Posterior cingulate gyrus (tissue), 11 donors: ENCODE measurements at regions of chr6 and their contacts with region 1.

Region 1: GRCh38 chr6:138115877-138116660 is 8.8 kb upstream of the PERP start:
- DNase-seq: peak in 8 of 10 donors; percentile 29 to 92 (median 51)

Region 2: GRCh38 chr6:138211027-138211581 is 95.0 kb after region 1 on chr6:
- intact Hi-C with region 1: loop called (anchors 1 kb)
- DNase-seq: peak in 1 of 10 donors; percentile 47

Region 3: DNA sequence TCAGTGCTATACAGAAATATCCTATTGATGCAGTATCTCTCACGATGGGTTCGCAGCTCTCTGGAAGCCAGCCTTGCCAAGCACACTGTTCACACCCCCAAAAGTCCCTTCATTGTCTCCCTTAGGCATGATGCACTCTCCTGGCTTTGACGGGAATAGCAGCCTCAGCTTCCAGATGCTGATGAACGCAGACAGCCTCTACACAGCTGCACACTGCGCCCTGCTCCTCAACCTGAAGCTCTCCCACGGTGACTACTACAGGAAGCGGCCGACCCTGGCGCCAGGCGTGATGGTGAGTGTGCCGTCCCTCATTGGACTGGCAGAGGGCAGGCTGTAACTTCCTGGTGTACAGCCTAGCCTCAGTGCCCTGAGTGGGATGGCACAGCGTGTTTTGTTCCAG is 162.3 kb after region 1 on chr6:
- intact Hi-C with region 1: loop called (anchors 2 kb)
- DNase-seq: peak in 8 of 10 donors; percentile 40 to 94 (median 67)

Region 4: DNA sequence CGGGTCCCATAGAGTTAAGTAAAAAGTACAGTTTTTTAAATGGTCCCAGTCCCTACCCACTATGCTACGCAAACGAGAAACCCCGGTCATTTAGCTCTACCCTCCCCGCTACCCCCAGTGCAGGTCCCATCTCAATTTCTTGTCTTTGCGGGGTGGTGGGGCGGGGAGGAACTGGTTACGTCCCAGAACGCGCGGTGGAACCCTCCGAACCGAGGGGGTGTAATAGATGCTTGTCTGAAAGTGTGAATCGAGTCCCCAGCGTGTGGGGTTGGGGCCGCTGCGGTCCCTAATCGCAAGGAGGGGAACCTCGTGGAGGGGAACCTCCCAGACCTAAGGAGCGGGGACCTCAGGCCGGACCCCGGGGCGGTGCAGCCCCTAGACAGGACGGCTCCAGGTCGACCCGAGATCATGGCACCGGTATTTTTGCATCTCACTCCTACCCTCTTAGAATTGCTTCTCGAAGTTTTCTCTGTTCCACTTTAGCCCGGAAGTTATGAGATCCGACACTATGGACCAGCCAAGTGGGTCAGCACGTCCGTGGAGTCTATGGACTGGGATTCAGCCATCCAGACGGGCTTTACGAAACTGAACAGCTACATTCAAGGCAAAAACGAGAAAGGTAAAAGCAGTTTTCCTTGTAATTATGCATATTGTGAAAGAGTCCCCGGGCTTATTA is 288.7 kb after region 1 on chr6:
- intact Hi-C with region 1: loop called (anchors 5 kb)
- DNase-seq: peak in 3 of 10 donors; percentile 16 to 86 (median 64)

Region 5: GRCh38 chr6:138517635-138518034 is 401.6 kb after region 1 on chr6:
- intact Hi-C with region 1: loop called (anchors 10 kb)
- DNase-seq: peak in 7 of 10 donors; percentile 15 to 88 (median 36)

Region 6: GRCh38 chr6:138588805-138589434 is 472.9 kb after region 1 on chr6:
- intact Hi-C with region 1: loop called (anchors 5 kb)
- DNase-seq: peak in 5 of 10 donors; percentile 39 to 63 (median 53)

Region 7: DNA sequence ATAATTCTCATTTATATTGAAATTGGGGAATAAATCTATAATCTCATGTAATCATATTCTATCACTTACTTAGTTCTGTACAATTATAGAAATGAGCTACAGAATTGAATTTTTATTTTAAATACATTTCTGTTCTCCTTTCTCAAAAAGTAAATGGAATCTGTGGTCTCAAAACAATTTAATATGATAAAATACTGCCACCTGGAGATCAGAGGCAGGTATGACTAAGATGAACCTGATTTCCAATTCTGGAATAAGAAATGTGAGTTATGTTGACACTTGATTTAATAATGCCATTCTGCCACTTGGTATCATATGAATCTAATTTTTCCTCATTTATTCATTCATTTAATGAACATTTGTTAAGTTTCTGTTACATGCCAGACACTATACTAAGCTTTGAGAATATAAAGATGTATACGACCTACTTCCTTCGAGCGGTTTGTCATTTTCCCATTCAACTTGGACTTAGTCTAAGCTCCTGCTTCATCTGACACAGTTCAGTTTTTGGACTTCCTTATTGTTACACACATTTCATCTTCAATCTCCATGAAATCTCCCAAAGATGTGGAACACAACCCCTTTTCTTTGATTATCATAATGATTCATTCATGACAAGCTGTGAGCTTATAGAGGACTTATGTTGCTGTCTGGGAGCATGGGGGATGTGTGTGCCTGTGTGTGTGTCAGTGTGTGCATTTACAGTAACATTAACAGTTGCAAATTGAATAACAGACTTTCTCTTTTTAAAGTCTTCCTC is 650.0 kb after region 1 on chr6:
- intact Hi-C with region 1: loop called (anchors 5 kb)
- DNase-seq: no peak